WTC11 (cell line): ENCODE measurements at regions of chr1 and their contacts with region 1.

Region 1: DNA sequence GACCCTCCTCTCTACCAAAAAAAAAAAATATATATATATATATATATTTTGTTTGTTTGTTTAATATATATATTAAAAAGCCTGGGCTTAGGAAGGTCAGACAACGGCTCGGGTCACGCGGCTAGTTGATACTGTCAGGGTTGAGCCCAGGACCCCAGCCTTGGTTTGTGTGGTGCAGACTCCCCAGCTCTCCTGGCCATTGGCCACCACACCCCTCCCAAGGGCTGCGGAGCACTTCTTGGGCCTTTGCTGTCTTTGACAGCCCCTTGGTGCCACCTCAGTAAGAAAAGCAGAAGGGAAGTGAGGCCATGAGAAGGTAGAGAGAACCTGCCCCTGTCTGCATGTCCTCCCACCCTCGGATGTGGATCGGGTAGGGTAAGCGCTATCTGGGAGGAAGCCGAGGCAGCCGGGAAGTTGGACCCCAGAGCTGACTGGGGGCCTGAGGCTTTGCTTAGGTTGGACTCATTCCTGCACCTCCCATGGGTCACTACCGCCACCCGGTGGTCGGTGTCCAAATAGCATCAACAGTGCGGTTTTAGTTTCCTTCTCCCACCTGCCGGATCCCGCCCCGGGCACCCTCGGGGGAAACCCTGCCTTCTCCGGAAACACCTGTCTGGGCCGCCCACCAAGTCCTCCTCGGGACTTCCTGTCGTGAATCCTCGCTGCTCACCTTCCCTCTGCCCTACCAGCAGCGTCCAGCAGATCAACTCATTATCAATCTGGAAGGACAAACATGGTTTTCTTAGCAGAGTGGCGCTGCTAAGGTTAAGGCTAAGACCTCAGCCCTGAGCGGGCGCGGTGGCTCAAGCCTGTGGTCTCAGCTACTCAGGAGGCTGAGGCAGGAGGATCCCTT is 29.8 kb upstream of the GNPAT start:
- DNase-seq: peak; percentile 97
- ATAC-seq: peak; percentile 93
- H3K4me3 Mint-ChIP-seq: peak overlapping the region; percentile 55
- H3K27ac Mint-ChIP-seq: no peak overlapping the region
- H3K4me1 Mint-ChIP-seq: peaks cover 14% of the 10 kb centered on the region
- H3K27me3 Mint-ChIP-seq: peaks cover 96% of the 10 kb centered on the region
- CTCF ChIP-seq: peak; percentile 90

Region 2: GRCh38 chr1:231016234-231016633 is 195.0 kb before region 1 on chr1:
- CTCF ChIA-PET with region 1: interaction called, 14 read pairs
- POLR2A ChIA-PET with region 1: no interaction called
- DNase-seq: no peak
- ATAC-seq: no peak
- H3K4me3 Mint-ChIP-seq: no peak overlapping the region
- H3K27ac Mint-ChIP-seq: no peak overlapping the region
- H3K4me1 Mint-ChIP-seq: peaks cover 19% of the 10 kb centered on the region
- H3K27me3 Mint-ChIP-seq: peaks cover 59% of the 10 kb centered on the region
- CTCF ChIP-seq: no peak

Region 3: GRCh38 chr1:231091831-231092301 is 119.4 kb before region 1 on chr1:
- CTCF ChIA-PET with region 1: interaction called, 14 read pairs
- POLR2A ChIA-PET with region 1: no interaction called
- DNase-seq: peak; percentile 69
- ATAC-seq: peak; percentile 93
- H3K4me3 Mint-ChIP-seq: no peak overlapping the region
- H3K27ac Mint-ChIP-seq: no peak overlapping the region
- H3K4me1 Mint-ChIP-seq: no peaks in the 10 kb centered on the region
- H3K27me3 Mint-ChIP-seq: peaks cover 68% of the 10 kb centered on the region
- CTCF ChIP-seq: peak; percentile 76

Region 4: GRCh38 chr1:231162297-231162969 is 48.8 kb before region 1 on chr1:
- CTCF ChIA-PET with region 1: interaction called, 13 read pairs
- POLR2A ChIA-PET with region 1: no interaction called
- DNase-seq: peak; percentile 69
- ATAC-seq: peak; percentile 65
- H3K4me3 Mint-ChIP-seq: peak overlapping the region; percentile 53
- H3K27ac Mint-ChIP-seq: no peak overlapping the region
- H3K4me1 Mint-ChIP-seq: no peaks in the 10 kb centered on the region
- H3K27me3 Mint-ChIP-seq: peaks cover 95% of the 10 kb centered on the region
- CTCF ChIP-seq: no peak

Region 5: GRCh38 chr1:231170875-231171274 is 40.4 kb before region 1 on chr1:
- CTCF ChIA-PET with region 1: interaction called, 17 read pairs
- POLR2A ChIA-PET with region 1: no interaction called
- DNase-seq: no peak
- ATAC-seq: peak; percentile 91
- H3K4me3 Mint-ChIP-seq: no peak overlapping the region
- H3K27ac Mint-ChIP-seq: no peak overlapping the region
- H3K4me1 Mint-ChIP-seq: 0 out of 2 replicates have a peak, but pooled peaks cover 2% of the 10 kb centered on the region
- H3K27me3 Mint-ChIP-seq: peaks cover 45% of the 10 kb centered on the region
- CTCF ChIP-seq: no peak

Region 6: DNA sequence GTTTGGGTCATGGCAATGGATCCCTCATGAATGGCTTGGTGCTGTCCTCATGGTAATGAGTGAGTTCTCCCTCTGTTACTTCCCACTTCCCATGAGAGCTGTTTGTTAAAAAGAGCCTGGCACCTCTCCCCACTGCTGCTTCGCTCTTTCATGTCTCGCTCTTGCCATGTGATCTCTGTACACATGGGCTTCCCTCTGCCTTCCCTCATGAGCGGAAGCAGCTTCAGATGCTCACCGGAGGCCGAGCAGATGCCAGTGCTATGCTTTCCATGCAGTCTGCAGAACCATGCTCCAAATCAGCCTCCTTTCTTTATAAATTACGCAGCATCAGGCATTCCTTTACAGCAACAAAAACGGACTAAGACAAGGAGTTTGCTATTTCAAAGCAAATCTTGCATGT is 14.9 kb after region 1 on chr1:
- CTCF ChIA-PET with region 1: no interaction called
- POLR2A ChIA-PET with region 1: no interaction called
- DNase-seq: no peak
- ATAC-seq: no peak
- H3K4me3 Mint-ChIP-seq: no peak overlapping the region
- H3K27ac Mint-ChIP-seq: no peak overlapping the region
- H3K4me1 Mint-ChIP-seq: no peaks in the 10 kb centered on the region
- H3K27me3 Mint-ChIP-seq: peaks cover 3% of the 10 kb centered on the region; the same call in 1 of the 2 replicates
- CTCF ChIP-seq: no peak